ENCODE measurements at regions of chr1 and their contacts with region 1.

Region 1: DNA sequence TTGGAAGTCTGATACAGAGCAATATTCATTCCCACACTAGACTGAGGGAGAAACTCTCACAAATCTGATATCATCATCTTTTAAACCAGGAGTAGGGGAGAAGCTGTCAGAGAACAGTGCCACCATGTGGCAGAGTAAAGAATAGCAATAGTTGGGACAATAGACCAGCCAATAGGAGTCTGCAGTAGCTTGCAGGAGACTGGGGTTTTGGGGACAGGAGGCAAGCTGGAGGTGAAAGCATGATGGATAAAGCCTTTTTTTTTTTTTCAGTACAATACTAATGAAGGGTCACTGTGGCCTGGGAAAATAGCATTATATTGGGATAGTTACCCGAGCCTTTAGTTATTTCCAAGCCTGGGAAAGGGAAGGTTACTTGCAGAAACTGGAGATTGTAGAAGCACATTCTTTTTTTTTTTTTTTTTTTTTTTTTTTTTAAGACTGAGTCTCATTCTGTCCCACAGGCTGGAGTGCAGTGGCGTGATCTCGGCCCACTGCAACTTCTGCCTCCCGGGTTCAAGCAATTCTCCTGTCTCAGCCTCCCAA is 120.7 kb downstream of the S1PR1 start:
- DNase-seq: no peak
- ATAC-seq: peak; percentile 76 to 85 (median 81)
- H3K4me3 ChIP-seq: no peak overlapping the region
- H3K27ac ChIP-seq: no peak overlapping the region
- H3K4me1 ChIP-seq: no peaks in the 10 kb centered on the region
- H3K27me3 ChIP-seq: peaks cover 0 to 3% (median 0%) of the 10 kb centered on the region in 3 donors
- CTCF ChIP-seq: peak; percentile 82

Region 2: DNA sequence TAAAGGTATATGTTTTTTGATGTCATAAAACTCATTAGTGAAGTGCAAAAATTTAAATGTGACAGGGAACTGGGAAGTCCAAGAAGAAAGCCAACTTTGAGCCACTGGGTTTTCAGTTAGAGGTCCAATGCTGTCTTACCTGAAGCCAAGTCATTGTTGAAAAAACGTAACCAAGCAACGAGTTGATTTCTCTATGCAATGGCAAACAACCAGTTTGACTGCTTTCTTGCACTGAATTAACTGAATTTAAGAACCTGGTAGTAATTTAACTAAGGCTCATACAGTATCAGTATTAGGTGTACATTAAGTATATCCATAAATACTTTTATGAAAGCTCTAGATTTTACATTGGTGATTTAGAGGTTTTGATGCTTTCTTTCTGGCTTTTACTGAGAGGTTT is 140.9 kb before region 1 on chr1:
- intact Hi-C with region 1: no loop called
- DNase-seq: no peak
- ATAC-seq: no peak
- H3K4me3 ChIP-seq: no peak overlapping the region
- H3K27ac ChIP-seq: no peak overlapping the region
- H3K4me1 ChIP-seq: no peaks in the 10 kb centered on the region
- H3K27me3 ChIP-seq: no peaks in the 10 kb centered on the region
- CTCF ChIP-seq: no peak

Region 3: GRCh38 chr1:101309334-101310311 is 47.9 kb before region 1 on chr1:
- intact Hi-C with region 1: loop called (anchors 2 to 5 kb)
- DNase-seq: peak; percentile 18 to 64
- ATAC-seq: peak; percentile 61 to 82 (median 68)
- H3K4me3 ChIP-seq: peak overlapping the region; percentile 63
- H3K27ac ChIP-seq: no peak overlapping the region
- H3K4me1 ChIP-seq: peaks cover 4% of the 10 kb centered on the region
- H3K27me3 ChIP-seq: peaks cover 0 to 5% (median 0%) of the 10 kb centered on the region in 3 donors
- CTCF ChIP-seq: peak; percentile 79